ENCODE measurements at regions of chr1 and their contacts with region 1.

Region 1: GRCh38 chr1:171644805-171645483 is 7.5 kb downstream of the MYOC start:
- DNase-seq: peak; percentile 87
- H3K4me3 Mint-ChIP-seq: no peak overlapping the region
- H3K27ac Mint-ChIP-seq: no peak overlapping the region
- H3K4me1 Mint-ChIP-seq: peaks cover 4% of the 10 kb centered on the region
- H3K27me3 Mint-ChIP-seq: no peaks in the 10 kb centered on the region

Region 2: GRCh38 chr1:170619241-170620028 is 1025.5 kb before region 1 on chr1:
- CTCF ChIA-PET with region 1: no interaction called
- intact Hi-C with region 1: no loop called
- DNase-seq: no peak
- H3K4me3 Mint-ChIP-seq: no peak overlapping the region
- H3K27ac Mint-ChIP-seq: no peak overlapping the region
- H3K4me1 Mint-ChIP-seq: no peaks in the 10 kb centered on the region
- H3K27me3 Mint-ChIP-seq: peaks cover 9% of the 10 kb centered on the region

Region 3: GRCh38 chr1:171654942-171655745 is 10.2 kb after region 1 on chr1:
- CTCF ChIA-PET with region 1: interaction called, 24 read pairs
- intact Hi-C with region 1: no loop called
- DNase-seq: peak; percentile 92
- H3K4me3 Mint-ChIP-seq: peak overlapping the region; percentile 39
- H3K27ac Mint-ChIP-seq: no peak overlapping the region
- H3K4me1 Mint-ChIP-seq: peaks cover 11% of the 10 kb centered on the region
- H3K27me3 Mint-ChIP-seq: peaks cover 5% of the 10 kb centered on the region

Region 4: DNA sequence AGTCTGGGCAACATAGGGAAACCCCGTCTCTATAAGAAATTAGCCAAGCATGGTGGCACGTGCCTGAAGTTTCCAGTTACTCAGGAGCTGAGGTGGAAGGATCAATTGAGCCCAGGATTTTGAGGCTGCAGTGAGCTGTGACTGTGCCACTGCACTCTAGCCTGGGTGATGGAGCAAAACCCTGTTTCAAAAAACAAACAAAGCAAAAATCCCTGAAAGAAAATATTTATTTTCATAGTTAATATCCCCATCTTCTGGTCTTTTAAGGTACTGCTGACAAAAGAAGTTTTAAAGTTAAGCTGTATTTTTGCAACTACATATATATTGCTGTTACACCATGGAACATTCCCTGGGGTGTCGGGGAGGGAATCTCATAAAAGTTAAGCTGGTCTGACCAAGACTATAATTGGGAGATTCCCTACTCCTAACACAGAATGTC is 70.9 kb after region 1 on chr1:
- CTCF ChIA-PET with region 1: interaction called, 10 read pairs
- intact Hi-C with region 1: no loop called
- DNase-seq: no peak
- H3K4me3 Mint-ChIP-seq: no peak overlapping the region
- H3K27ac Mint-ChIP-seq: no peak overlapping the region
- H3K4me1 Mint-ChIP-seq: peaks cover 4% of the 10 kb centered on the region
- H3K27me3 Mint-ChIP-seq: no peaks in the 10 kb centered on the region

Region 5: DNA sequence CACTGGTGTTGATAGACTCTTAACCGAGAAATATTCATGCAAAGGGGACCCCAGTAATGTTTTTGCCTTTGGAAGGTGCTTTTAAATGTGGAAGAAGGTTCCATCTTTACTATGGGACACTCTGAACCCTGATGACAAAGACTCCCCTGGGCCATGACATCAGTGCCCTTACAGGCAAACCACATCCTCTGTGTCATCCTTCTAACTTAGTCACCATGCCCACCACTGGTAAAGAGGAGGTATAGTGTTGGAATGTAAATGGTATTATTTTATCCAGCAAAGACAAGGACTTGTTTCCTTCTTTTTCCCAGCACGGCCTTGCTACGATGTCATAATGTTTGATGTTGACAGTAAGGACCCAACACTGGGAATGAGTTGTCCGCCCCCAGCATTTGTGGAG is 149.1 kb after region 1 on chr1:
- CTCF ChIA-PET with region 1: interaction called, 33 read pairs
- intact Hi-C with region 1: loop called (anchors 1 kb)
- DNase-seq: peak; percentile 78
- H3K4me3 Mint-ChIP-seq: no peak overlapping the region
- H3K27ac Mint-ChIP-seq: peak overlapping the region; percentile 89
- H3K4me1 Mint-ChIP-seq: peaks cover 23% of the 10 kb centered on the region
- H3K27me3 Mint-ChIP-seq: no peaks in the 10 kb centered on the region

Region 6: GRCh38 chr1:171801487-171801891 is 156.5 kb after region 1 on chr1:
- CTCF ChIA-PET with region 1: interaction called, 33 read pairs
- intact Hi-C with region 1: no loop called
- DNase-seq: no peak
- H3K4me3 Mint-ChIP-seq: no peak overlapping the region
- H3K27ac Mint-ChIP-seq: no peak overlapping the region
- H3K4me1 Mint-ChIP-seq: peaks cover 3% of the 10 kb centered on the region
- H3K27me3 Mint-ChIP-seq: no peaks in the 10 kb centered on the region

Region 7: GRCh38 chr1:171841050-171841940 is 196.4 kb after region 1 on chr1 and contains the start of gene DNM3:
- CTCF ChIA-PET with region 1: no interaction called
- intact Hi-C with region 1: loop called (anchors 5 kb)
- DNase-seq: peak; percentile 66
- H3K4me3 Mint-ChIP-seq: peak within 1 kb of the TSS; percentile 79
- H3K27ac Mint-ChIP-seq: no peak within 1 kb of the TSS
- H3K4me1 Mint-ChIP-seq: peaks cover 14% of the 10 kb centered on the region
- H3K27me3 Mint-ChIP-seq: peaks cover 13% of the 10 kb centered on the region
- total RNA-seq, gene DNM3: 0.96 to 0.98 TPM

Region 8: DNA sequence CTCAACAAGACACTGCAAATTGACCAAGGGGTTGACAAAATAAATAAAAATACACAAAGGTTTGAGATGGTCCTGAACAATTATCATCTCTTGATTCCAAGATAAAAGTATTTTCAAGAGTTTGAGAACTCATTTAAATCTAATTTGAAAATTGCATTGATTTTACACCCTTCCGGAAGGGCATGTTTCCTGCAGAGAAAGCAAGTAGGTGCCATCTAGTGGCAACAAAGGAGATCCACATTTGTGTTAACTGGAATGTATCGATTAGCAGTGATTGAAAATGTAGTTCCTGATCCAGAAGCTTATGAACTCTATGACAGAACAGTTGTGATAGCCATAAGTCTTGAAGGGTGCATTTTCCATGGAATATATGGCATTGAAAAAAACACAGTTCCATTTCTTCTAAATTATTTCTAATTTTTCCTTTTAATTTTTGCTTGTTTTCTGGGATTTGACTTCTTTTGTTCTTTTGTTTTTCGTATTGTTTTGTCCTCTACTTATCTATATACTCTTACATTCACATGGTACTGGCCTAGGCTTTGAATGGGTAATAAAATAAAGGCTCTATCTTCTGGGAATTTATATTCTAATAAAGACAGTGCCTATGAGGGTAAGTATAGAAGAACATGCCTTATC is 340.0 kb after region 1 on chr1:
- CTCF ChIA-PET with region 1: interaction called, 41 read pairs
- intact Hi-C with region 1: loop called (anchors 1 kb)
- DNase-seq: no peak
- H3K4me3 Mint-ChIP-seq: no peak overlapping the region
- H3K27ac Mint-ChIP-seq: no peak overlapping the region
- H3K4me1 Mint-ChIP-seq: no peaks in the 10 kb centered on the region
- H3K27me3 Mint-ChIP-seq: no peaks in the 10 kb centered on the region

Measured in activated naive CD4-positive, alpha-beta T cell treated with anti-CD3 and anti-CD28 coated beads for 36 hours (primary cell).